ENCODE measurements at regions of chr20 and their contacts with region 1.

Region 1: GRCh38 chr20:6767536-6768227 is at the start of gene BMP2:
- DNase-seq: peak; percentile 51 to 87
- ATAC-seq: peak; percentile 77
- H3K4me3 ChIP-seq: peak within 1 kb of the TSS; percentile 89 to 94
- H3K27ac ChIP-seq: peak within 1 kb of the TSS in 1 of 2 donors; percentile 20
- H3K4me1 ChIP-seq: no peaks in the 10 kb centered on the region
- H3K27me3 ChIP-seq: no peaks in the 10 kb centered on the region
- total RNA-seq, gene BMP2: 3.5 to 15.9 TPM

Region 2: GRCh38 chr20:6164421-6165341 is 603.0 kb before region 1 on chr20:
- intact Hi-C with region 1: loop called in 1 of 2 experiments (anchors 5 kb)
- DNase-seq: no peak
- ATAC-seq: peak; percentile 54
- H3K4me3 ChIP-seq: no peak overlapping the region
- H3K27ac ChIP-seq: peak overlapping the region in 1 of 2 donors; percentile 10
- H3K4me1 ChIP-seq: peaks cover 2 to 7% of the 10 kb centered on the region in 2 donors
- H3K27me3 ChIP-seq: no peaks in the 10 kb centered on the region

Region 3: GRCh38 chr20:6265204-6265904 is 502.3 kb before region 1 on chr20:
- intact Hi-C with region 1: loop called in 1 of 2 experiments (anchors 10 kb)
- DNase-seq: no peak
- ATAC-seq: peak; percentile 67
- H3K4me3 ChIP-seq: peak overlapping the region in 1 of 2 donors; percentile 72
- H3K27ac ChIP-seq: no peak overlapping the region
- H3K4me1 ChIP-seq: no peaks in the 10 kb centered on the region
- H3K27me3 ChIP-seq: no peaks in the 10 kb centered on the region

Region 4: DNA sequence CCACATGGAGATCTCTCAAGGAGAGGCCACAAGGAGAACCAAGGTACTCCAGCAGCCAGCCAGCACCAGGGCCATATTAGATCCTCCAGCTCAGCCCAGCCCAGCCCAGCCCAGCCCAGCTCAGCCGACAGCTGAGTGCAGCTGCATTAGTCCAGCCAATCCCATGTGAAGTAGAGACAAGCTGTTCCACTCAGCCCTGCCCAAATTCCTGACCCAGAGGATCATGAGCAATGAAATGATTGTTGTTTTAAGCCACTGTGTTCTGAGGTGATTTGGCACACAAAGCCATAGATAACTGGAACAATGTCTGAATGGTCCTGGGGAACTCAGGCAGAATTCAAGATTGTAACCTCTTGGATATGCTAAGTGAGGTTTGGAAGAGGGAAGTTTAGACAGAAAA is 59.7 kb before region 1 on chr20:
- intact Hi-C with region 1: loop called (anchors 5 kb)
- DNase-seq: peak; percentile 52 to 84
- ATAC-seq: peak; percentile 49
- H3K4me3 ChIP-seq: no peak overlapping the region
- H3K27ac ChIP-seq: no peak overlapping the region
- H3K4me1 ChIP-seq: peaks cover 2 to 6% of the 10 kb centered on the region in 2 donors
- H3K27me3 ChIP-seq: no peaks in the 10 kb centered on the region

Region 5: DNA sequence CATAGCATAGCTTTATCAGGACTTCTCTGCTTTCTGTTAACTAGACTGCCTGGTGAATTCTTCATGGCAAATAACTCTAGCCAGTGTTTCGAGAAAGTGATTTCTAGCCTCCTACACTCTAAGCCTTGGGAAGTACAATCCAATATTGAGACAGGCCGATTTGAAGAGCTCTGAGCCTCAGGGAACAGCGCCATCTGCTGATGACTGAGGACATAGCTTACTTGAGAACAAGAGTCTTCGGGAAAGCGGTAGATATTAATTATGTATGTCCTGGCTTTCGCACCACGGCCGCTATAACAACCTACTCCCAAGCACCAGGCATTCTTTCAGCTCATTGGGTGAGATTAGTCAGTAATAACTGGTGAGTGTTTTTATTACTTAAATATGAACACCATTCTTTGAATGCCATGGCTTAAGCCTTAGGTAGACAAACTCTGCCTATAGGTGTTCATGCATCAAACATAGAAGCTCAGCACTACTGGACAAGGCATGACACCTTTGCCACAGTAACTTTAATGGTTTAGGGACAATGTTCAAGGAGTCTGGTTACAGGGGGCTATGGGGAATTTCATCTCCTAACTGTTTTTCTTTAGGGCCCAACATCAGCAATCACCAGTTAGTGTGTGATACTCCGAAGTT is 518.4 kb after region 1 on chr20:
- intact Hi-C with region 1: loop called in 1 of 2 experiments (anchors 10 kb)
- DNase-seq: peak; percentile 68 to 80
- ATAC-seq: peak; percentile 73
- H3K4me3 ChIP-seq: no peak overlapping the region
- H3K27ac ChIP-seq: no peak overlapping the region
- H3K4me1 ChIP-seq: no peaks in the 10 kb centered on the region
- H3K27me3 ChIP-seq: peaks cover 0 to 2% of the 10 kb centered on the region in 2 donors

Region 6: GRCh38 chr20:7323955-7324354 is 556.3 kb after region 1 on chr20:
- intact Hi-C with region 1: no loop called
- DNase-seq: no peak
- ATAC-seq: no peak
- H3K4me3 ChIP-seq: no peak overlapping the region
- H3K27ac ChIP-seq: no peak overlapping the region
- H3K4me1 ChIP-seq: no peaks in the 10 kb centered on the region
- H3K27me3 ChIP-seq: no peaks in the 10 kb centered on the region

Region 7: DNA sequence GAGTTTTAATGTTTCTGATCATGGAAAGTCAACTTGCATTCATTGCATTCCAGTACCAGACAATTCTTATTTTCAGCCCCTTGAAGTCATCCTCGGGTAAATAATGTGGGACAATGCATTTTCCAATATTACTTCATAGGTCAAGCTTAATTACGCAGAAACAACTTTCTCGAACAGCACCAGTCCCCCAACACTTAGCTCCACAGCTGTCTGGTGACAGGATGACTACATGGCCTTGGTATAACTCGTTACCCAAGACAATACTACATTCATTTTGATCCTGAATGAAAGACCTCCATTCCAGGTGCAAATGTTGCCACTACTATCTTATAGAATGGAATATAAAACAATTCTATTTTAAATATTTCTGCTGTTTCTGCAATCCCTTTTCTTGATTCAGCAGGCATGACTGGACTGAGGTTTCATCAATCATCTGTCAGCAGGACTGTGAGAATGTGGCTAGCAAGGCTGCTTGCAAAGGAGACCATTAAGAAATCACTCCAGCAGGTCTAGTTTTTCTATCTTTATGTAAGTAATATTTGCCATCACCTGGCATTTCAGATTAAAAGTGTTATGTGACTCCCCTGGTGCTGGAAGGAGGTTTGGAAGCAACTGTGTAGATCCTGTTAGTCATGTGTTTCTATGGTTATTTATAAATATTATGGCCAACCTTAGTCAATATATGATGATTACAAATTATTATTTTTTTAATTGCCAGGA is 1024.6 kb after region 1 on chr20:
- intact Hi-C with region 1: no loop called
- DNase-seq: no peak
- ATAC-seq: no peak
- H3K4me3 ChIP-seq: no peak overlapping the region
- H3K27ac ChIP-seq: no peak overlapping the region
- H3K4me1 ChIP-seq: no peaks in the 10 kb centered on the region
- H3K27me3 ChIP-seq: no peaks in the 10 kb centered on the region

Measured in aorta (tissue), 5 donors.